Aorta (tissue), 5 donors: ENCODE measurements at regions of chr6 and their contacts with region 1.

Region 1: GRCh38 chr6:106339334-106340029 is 13.9 kb upstream of the ATG5 start:
- DNase-seq: no peak
- ATAC-seq: peak; percentile 74
- H3K4me3 ChIP-seq: no peak overlapping the region
- H3K27ac ChIP-seq: no peak overlapping the region
- H3K4me1 ChIP-seq: peaks cover 0 to 2% of the 10 kb centered on the region in 2 donors
- H3K27me3 ChIP-seq: peaks cover 0 to 1% of the 10 kb centered on the region in 2 donors

Region 2: DNA sequence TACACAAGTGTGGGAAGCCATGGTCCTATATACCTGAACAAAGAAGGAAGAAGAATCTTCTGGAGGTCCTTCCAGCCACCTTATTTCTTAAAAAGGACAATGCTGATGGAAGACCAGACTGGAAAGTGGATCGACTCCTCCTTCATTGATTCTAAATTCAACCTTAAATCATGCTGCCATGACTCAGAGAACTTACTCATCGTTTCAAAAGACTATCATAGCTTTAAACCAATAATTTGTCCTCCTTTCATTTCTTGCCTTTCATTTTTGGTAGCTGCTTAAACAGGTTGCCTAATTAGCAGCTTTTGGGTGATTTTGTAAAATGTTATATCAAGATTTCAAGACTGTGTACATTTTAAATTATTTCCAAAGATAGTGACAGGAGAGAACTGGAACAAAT is 229.0 kb after region 1 on chr6:
- intact Hi-C with region 1: loop called (anchors 5 kb)
- DNase-seq: no peak
- ATAC-seq: no peak
- H3K4me3 ChIP-seq: no peak overlapping the region
- H3K27ac ChIP-seq: no peak overlapping the region
- H3K4me1 ChIP-seq: no peaks in the 10 kb centered on the region
- H3K27me3 ChIP-seq: no peaks in the 10 kb centered on the region

Region 3: DNA sequence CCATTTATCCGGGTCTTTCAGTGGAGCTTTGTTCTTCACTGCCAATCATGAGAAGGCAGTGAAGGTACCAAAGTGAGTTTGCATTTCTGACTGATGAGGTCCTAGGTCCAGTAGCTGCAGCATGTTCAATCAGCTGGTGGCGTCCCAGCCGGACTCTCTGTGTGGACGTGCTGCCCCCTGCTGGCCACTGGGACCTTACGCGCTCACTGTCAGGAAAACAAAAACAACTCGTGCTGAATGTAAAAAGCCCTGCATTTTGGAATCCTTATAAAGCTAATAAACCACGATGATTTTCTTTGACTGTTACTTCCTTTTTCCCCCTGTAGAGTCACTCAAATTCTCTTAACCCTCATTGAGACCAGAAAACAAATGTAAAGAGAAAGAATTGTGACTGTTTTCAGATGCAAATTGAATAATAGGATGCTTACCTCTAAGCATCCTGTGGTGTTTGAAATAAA is 640.0 kb after region 1 on chr6:
- intact Hi-C with region 1: loop called in 1 of 2 experiments (anchors 10 kb)
- DNase-seq: peak; percentile 85 to 94
- ATAC-seq: peak; percentile 89
- H3K4me3 ChIP-seq: no peak overlapping the region
- H3K27ac ChIP-seq: no peak overlapping the region
- H3K4me1 ChIP-seq: no peaks in the 10 kb centered on the region
- H3K27me3 ChIP-seq: no peaks in the 10 kb centered on the region